Activated CD8-positive, alpha-beta memory T cell treated with anti-CD3 and anti-CD28 coated beads, Interleukin-2, amount 10 ng/mL, durations not matched to agents 7 days and 5 days (primary cell): ENCODE measurements at regions of chr22 and their contacts with region 1.

Region 1: GRCh38 chr22:29245637-29246385 is 22.0 kb downstream of the RHBDD3 start:
- DNase-seq: peak; percentile 80
- ATAC-seq: peak; percentile 89
- H3K4me3 Mint-ChIP-seq: no peak overlapping the region
- H3K27ac Mint-ChIP-seq: no peak overlapping the region
- H3K4me1 Mint-ChIP-seq: no peaks in the 10 kb centered on the region
- H3K27me3 Mint-ChIP-seq: peaks cover 19% of the 10 kb centered on the region

Region 2: DNA sequence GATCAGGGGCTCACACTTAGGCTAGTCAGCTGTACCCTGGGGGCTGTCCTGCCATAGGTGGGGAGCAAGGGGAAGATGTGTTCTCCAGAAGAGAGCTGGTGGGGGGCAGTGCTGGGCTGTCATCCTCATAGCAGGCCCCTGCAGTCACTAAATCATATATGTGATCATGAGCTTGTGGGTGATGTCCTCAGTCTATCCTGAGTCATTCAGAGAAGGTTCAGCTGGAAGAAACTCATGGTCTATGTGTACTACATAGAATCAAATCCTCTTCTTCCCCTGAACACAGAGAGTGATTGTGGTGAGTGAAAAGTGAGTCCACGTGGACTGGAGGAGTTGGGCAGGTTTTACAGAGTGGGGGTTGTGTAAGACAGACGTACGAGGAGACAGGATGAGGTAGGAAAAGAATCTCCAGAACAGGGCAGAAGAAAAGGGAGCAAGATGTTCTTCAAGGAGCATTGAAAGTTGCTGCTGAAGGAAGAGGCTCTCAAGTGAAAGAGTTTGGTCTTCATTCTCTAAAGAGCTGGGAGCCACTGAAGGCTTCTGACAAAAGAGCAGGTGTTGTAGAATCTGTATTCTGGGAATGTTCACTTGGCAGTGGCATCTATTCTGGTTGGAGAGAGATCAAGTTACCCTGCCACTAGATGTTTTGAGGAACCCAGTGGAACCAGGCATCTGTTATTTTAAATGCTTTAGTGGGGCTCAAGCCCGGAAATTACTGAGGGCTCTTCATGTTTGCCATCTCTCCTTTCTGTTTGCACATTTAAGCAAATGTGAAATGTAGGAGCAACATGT is 253.1 kb before region 1 on chr22:
- CTCF ChIA-PET with region 1: no interaction called
- DNase-seq: no peak
- ATAC-seq: no peak
- H3K4me3 Mint-ChIP-seq: no peak overlapping the region
- H3K27ac Mint-ChIP-seq: no peak overlapping the region
- H3K4me1 Mint-ChIP-seq: peaks cover 3% of the 10 kb centered on the region
- H3K27me3 Mint-ChIP-seq: peaks cover 18% of the 10 kb centered on the region

Region 3: DNA sequence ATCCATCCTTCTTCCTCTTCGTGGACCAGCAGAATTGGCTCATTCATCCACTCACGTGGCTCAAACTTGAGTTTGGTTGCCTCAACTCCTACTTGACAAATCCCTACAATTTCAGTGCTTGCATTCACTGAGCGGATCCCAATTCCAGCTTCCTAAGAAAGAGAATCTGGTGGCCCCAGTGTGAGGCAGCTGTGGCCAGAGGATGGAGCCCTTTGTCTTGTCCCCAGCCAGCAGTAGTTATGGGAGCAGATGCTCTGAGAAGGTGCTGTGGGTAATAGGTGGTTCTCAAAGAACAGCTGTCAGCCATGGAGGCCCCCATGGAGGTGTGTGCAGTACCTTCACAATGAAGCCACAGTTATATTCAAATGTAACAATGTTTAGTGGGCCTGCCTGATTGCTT is 133.7 kb before region 1 on chr22:
- CTCF ChIA-PET with region 1: interaction called, 11 read pairs
- DNase-seq: peak; percentile 39
- ATAC-seq: no peak
- H3K4me3 Mint-ChIP-seq: no peak overlapping the region
- H3K27ac Mint-ChIP-seq: no peak overlapping the region
- H3K4me1 Mint-ChIP-seq: peaks cover 24% of the 10 kb centered on the region
- H3K27me3 Mint-ChIP-seq: peaks cover 42% of the 10 kb centered on the region

Region 4: GRCh38 chr22:29154364-29155048 is 91.3 kb before region 1 on chr22:
- CTCF ChIA-PET with region 1: interaction called, 21 read pairs
- DNase-seq: peak; percentile 84
- ATAC-seq: peak; percentile 91
- H3K4me3 Mint-ChIP-seq: peak overlapping the region; percentile 18
- H3K27ac Mint-ChIP-seq: no peak overlapping the region
- H3K4me1 Mint-ChIP-seq: peaks cover 21% of the 10 kb centered on the region
- H3K27me3 Mint-ChIP-seq: peaks cover 46% of the 10 kb centered on the region

Region 5: DNA sequence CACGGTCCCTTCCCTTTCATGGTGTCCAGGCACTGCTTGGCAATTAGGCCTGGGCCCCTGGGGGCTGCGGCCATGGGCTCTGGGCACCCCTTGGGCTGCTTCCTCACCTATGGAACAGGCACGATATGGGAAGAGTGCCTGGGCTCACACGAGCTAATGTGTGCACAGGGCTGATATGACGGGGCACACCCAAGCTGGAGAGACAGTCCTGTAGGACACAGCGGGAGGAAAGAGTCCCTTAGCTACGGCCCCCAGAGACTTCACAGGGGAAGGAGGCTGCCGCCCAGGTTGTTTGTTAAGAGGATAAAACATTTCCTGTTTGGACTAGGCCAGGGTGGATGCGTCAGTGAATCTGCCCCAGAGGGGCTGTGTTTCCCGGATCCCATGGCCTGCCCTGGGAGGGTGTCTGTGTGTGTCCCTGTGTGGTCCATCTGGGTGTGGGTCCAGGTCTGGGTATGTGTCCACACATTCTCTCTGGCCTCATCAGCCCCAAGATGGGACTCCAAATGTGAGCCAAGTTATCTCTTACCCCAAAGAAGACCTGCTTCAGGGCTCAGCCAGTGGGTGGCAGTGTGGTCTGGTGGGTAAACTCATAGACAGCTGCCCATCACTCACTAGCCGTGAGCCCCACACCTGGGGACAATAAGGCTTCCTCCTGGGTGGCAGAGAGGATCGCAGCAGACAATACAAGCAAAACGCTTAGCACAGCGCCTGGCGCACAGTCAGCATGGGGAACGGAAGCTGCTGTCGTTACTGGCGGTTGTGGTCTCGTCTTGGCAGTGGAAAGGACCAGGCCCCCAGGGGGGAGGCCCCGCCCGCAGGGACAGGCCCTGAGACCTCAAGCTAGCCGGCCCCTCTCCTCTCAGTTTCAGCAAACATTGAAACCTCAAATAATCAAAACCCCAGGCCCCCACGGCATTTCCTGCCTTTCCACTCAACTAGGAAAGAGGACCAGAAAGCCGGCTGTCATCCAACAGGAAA is 43.3 kb before region 1 on chr22:
- CTCF ChIA-PET with region 1: interaction called, 43 read pairs
- DNase-seq: peak; percentile 91
- ATAC-seq: peak; percentile 88
- H3K4me3 Mint-ChIP-seq: peak overlapping the region; percentile 11
- H3K27ac Mint-ChIP-seq: peak overlapping the region; percentile 88
- H3K4me1 Mint-ChIP-seq: peaks cover 32% of the 10 kb centered on the region
- H3K27me3 Mint-ChIP-seq: peaks cover 55% of the 10 kb centered on the region

Region 6: GRCh38 chr22:29231971-29232959 is 13.5 kb before region 1 on chr22:
- CTCF ChIA-PET with region 1: interaction called, 26 read pairs
- DNase-seq: no peak
- ATAC-seq: no peak
- H3K4me3 Mint-ChIP-seq: no peak overlapping the region
- H3K27ac Mint-ChIP-seq: no peak overlapping the region
- H3K4me1 Mint-ChIP-seq: no peaks in the 10 kb centered on the region
- H3K27me3 Mint-ChIP-seq: no peaks in the 10 kb centered on the region

Region 7: DNA sequence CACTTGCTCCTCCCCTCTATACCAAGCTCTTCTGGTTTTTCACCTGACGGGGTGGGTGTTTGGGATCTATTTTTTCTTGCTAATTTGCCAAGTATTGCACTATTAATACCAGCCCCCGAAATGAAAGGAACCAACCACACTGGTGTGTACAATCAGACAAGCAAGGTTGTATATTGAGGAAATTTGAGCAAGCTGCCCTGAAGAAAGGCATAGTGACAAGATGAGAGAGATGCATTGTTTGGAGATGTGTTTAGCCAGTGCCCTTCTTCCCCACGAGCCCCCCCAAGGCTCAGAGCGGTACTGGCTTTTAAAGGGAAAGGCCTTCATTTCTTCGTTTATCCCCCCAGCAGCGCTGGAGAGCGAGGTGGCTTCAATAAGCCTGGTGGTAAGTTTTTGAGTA is 45.4 kb after region 1 on chr22:
- CTCF ChIA-PET with region 1: no interaction called
- DNase-seq: no peak
- ATAC-seq: no peak
- H3K4me3 Mint-ChIP-seq: no peak overlapping the region
- H3K27ac Mint-ChIP-seq: no peak overlapping the region
- H3K4me1 Mint-ChIP-seq: peaks cover 6% of the 10 kb centered on the region
- H3K27me3 Mint-ChIP-seq: no peaks in the 10 kb centered on the region